WTC11 (cell line): ENCODE measurements at regions of chr15 and their contacts with region 1.

Region 1: GRCh38 chr15:48307586-48307985 is 23.6 kb upstream of the DUT start:
- DNase-seq: no peak
- ATAC-seq: no peak
- H3K4me3 Mint-ChIP-seq: no peak overlapping the region
- H3K27ac Mint-ChIP-seq: 0 out of 2 replicates have a peak overlapping the region, but pooled peaks have one; percentile 47
- H3K4me1 Mint-ChIP-seq: peaks cover 57% of the 10 kb centered on the region
- H3K27me3 Mint-ChIP-seq: no peaks in the 10 kb centered on the region
- CTCF ChIP-seq: no peak

Region 2: DNA sequence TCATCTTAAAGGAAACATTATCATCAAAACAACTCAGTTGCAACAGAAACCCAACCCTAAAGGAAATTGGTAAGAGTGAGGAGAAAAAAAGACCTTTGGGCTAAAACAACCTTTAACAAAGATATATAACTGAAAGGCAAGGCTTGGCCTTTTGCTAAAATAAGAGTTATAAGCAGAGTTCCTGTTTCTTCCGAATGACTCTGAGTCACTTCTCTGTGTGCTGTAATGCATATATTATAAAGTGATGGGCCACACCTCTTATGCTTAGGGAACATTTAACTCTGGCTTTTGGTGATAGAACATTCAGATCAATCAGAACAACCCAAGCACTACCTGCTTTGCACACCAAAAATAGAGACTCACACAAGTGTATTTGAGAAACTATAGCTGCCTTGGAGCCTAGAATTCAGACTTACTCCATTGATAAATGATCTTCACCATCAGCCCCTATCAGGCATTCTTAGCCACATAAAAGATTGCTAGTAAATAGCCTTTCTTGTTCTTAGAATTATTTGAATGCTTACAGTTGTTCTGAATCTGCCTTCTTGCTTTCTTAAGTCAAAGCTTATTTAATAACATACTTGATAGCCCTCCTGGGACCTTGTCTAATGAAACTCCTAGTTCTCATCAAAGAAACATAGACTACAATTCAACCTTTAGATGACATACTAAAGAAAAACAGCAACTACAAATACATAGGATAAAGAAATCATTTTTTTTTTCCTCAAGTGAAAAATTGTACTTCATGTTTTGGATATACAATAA is 884.5 kb before region 1 on chr15:
- CTCF ChIA-PET with region 1: no interaction called
- POLR2A ChIA-PET with region 1: interaction called, 14 read pairs
- DNase-seq: no peak
- ATAC-seq: no peak
- H3K4me3 Mint-ChIP-seq: no peak overlapping the region
- H3K27ac Mint-ChIP-seq: no peak overlapping the region
- H3K4me1 Mint-ChIP-seq: no peaks in the 10 kb centered on the region; the same call in 1 of the 2 replicates
- H3K27me3 Mint-ChIP-seq: no peaks in the 10 kb centered on the region
- CTCF ChIP-seq: no peak

Region 3: GRCh38 chr15:48324914-48325313 is 17.3 kb after region 1 on chr15:
- CTCF ChIA-PET with region 1: no interaction called
- POLR2A ChIA-PET with region 1: no interaction called
- DNase-seq: no peak
- ATAC-seq: no peak
- H3K4me3 Mint-ChIP-seq: no peak overlapping the region
- H3K27ac Mint-ChIP-seq: no peak overlapping the region
- H3K4me1 Mint-ChIP-seq: peaks cover 9% of the 10 kb centered on the region
- H3K27me3 Mint-ChIP-seq: no peaks in the 10 kb centered on the region
- CTCF ChIP-seq: no peak